ENCODE measurements at regions of chr10 and their contacts with region 1.

Region 1: GRCh38 chr10:118710486-118710885 is 44.3 kb downstream of the CACUL1 start:
- DNase-seq: no peak
- H3K4me3 Mint-ChIP-seq: no peak overlapping the region
- H3K27ac Mint-ChIP-seq: no peak overlapping the region
- H3K4me1 Mint-ChIP-seq: no peaks in the 10 kb centered on the region
- H3K27me3 Mint-ChIP-seq: no peaks in the 10 kb centered on the region
- CTCF ChIP-seq: no peak

Region 2: DNA sequence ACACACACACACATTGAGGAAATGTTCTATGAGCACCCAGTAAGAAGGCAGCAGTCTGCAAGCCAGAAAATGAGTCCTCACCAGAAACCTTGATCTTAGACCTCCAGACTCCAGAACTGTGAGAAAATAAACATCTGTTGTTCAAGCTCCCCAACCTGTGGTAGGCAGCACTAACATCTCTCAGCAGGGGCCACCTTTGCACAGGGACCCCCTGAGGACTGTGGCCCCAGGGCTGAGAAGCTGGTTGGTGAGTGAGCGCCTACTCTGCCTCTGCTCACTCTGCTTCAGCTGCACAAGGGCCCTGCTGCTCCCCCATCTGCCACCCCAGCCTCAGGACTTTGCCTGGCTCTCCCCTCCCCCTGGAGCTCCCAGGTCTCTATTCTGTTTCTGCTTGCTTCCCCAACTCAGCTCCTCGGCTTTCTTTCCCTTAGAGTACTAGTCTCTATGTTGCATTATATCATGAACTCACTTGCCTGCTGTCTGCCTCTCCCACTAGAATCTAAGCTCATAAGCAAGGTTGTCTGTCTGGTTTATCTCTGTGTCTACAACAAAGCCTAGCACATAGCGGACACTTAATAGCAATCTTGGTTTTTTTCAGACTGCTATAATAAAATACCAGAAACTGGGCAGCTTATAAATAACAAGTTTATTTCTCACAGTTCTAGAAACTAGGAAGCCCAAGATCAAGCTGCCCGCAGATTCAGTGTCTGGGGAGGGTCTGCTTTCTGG is 74.6 kb before region 1 on chr10:
- CTCF ChIA-PET with region 1: no interaction called
- intact Hi-C with region 1: loop called (anchors 2 kb)
- DNase-seq: no peak
- H3K4me3 Mint-ChIP-seq: no peak overlapping the region
- H3K27ac Mint-ChIP-seq: no peak overlapping the region
- H3K4me1 Mint-ChIP-seq: no peaks in the 10 kb centered on the region
- H3K27me3 Mint-ChIP-seq: peaks cover 92% of the 10 kb centered on the region
- CTCF ChIP-seq: no peak

Measured in Calu3 (cell line).